Dendritic cell treated with granulocyte-macrophage colony-stimulating factor and Interleukin-4, amounts not matched to agents 40 ng/mL and 50 ng/mL, for 4 days (primary cell): ENCODE measurements at regions of chr15 and their contacts with region 1.

Region 1: DNA sequence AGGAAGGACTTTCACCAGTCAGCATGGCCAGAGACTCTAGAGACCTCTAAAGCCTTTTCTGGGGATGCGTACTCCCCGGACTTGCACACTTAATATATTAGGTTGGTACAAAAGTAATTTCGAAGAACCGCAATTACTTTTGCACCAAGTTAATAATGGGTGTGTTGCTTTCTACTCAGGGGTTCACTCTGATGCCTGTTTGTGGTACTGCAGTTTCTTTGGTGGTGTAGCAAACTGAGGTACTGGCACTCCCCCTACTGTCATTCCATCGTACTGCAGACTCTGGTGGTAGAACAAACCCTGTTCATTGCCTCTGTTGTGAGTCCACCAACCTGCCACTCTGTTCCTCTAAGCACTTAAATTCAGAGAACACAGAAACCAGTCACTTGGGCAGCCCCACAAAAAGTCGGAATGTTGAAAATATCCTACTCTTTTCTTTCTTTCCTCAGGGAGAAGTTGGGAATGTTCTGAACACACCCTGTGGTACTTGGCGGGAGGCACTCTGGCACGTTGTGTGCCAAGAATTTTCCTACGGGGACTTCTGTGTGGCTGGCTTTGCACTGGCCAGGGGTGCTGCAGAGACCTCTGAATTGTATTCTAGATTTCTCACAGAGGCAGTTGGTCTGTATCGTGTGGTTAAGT is 46.3 kb downstream of the GABRG3 start:
- H3K4me3 Mint-ChIP-seq: no peak overlapping the region
- H3K27ac Mint-ChIP-seq: no peak overlapping the region
- H3K4me1 Mint-ChIP-seq: no peaks in the 10 kb centered on the region
- H3K27me3 Mint-ChIP-seq: no peaks in the 10 kb centered on the region

Region 2: DNA sequence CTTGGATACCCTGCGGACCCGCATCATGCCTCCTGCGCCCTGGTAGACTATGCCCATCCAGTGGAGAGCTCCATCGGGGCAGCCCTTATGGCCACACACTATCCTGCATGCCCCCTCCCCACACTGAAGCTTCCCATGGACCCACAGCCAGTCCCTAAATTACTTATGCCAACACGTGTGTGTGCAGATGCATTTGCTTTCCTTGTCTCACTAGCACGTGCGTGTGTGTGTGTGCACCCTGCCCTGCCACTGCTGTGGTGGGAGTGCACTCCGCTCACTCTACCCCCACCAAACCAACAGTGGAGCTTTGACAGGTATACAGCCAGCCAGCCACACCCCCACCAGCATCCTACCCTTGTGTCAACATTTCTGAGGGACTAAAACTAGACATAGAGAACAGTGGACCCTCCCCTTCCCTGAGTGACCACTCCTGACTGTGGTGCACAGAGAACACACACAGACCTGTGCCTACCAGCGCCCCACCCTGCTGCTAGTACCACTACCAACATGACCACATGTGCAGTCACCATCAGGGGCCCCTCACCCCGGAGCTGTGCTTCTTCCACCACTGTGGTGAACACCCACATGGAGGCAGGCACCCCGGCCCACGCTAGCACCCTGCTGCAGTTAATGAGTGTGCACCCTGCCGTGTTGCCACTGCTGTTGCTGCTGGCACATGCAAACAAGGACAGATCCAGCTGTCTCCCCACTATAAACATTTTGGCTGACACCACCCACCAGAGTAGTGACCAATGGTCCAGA is 555.3 kb before region 1 on chr15:
- intact Hi-C with region 1: no loop called
- H3K4me3 Mint-ChIP-seq: no peak overlapping the region
- H3K27ac Mint-ChIP-seq: no peak overlapping the region
- H3K4me1 Mint-ChIP-seq: no peaks in the 10 kb centered on the region
- H3K27me3 Mint-ChIP-seq: no peaks in the 10 kb centered on the region

Region 3: DNA sequence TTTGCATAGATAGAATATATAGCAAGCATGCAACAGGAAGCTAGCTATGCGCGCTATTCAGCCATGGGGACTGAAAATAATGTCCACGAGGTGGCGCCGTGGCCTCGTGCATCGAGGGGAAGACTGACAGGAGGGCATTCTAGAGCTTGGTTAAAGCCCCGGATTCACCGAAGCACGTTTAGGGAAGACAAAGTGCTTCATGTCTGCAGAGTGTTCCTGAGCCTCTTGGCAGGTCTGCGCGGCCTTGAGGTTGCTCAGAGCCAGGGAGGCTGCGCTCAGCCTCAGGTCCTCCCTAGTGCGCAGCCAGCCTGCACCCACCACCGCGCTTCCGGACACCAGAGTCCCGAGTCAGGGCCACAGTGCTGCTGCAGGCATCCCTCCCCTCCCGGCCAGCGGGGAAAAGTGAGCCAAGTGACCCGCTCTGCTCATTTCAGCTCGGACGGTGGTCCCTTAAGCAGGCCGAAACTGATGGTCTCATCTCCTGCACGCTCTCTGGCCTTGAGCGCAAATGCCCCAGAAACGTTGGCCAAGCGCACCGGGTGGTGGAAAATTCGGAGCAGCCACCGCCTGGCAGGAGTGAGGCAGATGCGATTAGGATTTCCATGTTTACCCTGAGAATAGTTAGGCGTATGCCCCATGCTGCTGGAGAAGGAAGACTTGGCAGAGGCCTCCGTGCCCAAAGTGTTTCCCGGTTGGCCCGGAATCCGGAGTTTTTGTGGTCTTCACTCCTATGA is 125.7 kb before region 1 on chr15:
- intact Hi-C with region 1: loop called (anchors 10 kb)
- H3K4me3 Mint-ChIP-seq: no peak overlapping the region
- H3K27ac Mint-ChIP-seq: no peak overlapping the region
- H3K4me1 Mint-ChIP-seq: no peaks in the 10 kb centered on the region
- H3K27me3 Mint-ChIP-seq: peaks cover 8% of the 10 kb centered on the region